IMR-90 (cell line): ENCODE measurements at regions of chr6 and their contacts with region 1.

Region 1: DNA sequence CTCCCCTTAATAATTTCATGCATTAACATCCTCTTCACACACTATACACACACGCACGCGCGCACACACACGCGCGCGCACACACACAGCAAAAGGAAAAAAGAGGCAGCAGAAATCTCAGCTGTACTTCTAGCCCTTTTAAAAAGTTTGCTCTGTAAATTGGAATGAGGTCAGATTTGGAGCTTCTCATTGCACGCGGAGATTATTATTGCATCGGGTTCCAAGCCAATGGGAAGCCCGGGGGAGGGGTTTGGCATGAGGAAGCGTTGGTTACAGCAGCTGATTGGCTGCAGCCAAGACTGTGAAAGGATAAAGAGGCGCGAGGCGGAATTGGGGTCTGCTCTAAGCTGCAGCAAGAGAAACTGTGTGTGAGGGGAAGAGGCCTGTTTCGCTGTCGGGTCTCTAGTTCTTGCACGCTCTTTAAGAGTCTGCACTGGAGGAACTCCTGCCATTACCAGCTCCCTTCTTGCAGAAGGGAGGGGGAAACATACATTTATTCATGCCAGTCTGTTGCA is at the start of gene SOX4:
- DNase-seq: peak; percentile 98
- ATAC-seq: peak; percentile 79
- H3K4me3 ChIP-seq: peak within 1 kb of the TSS; percentile 84
- H3K27ac ChIP-seq: peak within 1 kb of the TSS; percentile 90
- H3K4me1 ChIP-seq: no peaks in the 10 kb centered on the region
- H3K27me3 ChIP-seq: no peaks in the 10 kb centered on the region
- CTCF ChIP-seq: no peak
- POLR2A ChIP-seq: peak; percentile 98
- RAD21 ChIP-seq: no peak; the same call in 1 of the 2 replicates
- total RNA-seq, gene SOX4: 4.7 and 6.4 TPM in 2 replicates

Region 2: GRCh38 chr6:20564269-20564668 is 1029.2 kb before region 1 on chr6:
- CTCF ChIA-PET with region 1: interaction called, 8 read pairs
- POLR2A ChIA-PET with region 1: interaction called, 4 read pairs
- dilution Hi-C with region 1: no loop called
- in situ Hi-C with region 1: loop called (anchors 5 kb)
- intact Hi-C with region 1: loop called (anchors 1 kb)
- DNase-seq: peak; percentile 27
- ATAC-seq: peak; percentile 64
- H3K4me3 ChIP-seq: no peak overlapping the region
- H3K27ac ChIP-seq: no peak overlapping the region
- H3K4me1 ChIP-seq: no peaks in the 10 kb centered on the region; the same call in 1 of the 2 replicates
- H3K27me3 ChIP-seq: no peaks in the 10 kb centered on the region
- CTCF ChIP-seq: peak; percentile 59
- POLR2A ChIP-seq: no peak
- RAD21 ChIP-seq: peak; percentile 61

Region 3: DNA sequence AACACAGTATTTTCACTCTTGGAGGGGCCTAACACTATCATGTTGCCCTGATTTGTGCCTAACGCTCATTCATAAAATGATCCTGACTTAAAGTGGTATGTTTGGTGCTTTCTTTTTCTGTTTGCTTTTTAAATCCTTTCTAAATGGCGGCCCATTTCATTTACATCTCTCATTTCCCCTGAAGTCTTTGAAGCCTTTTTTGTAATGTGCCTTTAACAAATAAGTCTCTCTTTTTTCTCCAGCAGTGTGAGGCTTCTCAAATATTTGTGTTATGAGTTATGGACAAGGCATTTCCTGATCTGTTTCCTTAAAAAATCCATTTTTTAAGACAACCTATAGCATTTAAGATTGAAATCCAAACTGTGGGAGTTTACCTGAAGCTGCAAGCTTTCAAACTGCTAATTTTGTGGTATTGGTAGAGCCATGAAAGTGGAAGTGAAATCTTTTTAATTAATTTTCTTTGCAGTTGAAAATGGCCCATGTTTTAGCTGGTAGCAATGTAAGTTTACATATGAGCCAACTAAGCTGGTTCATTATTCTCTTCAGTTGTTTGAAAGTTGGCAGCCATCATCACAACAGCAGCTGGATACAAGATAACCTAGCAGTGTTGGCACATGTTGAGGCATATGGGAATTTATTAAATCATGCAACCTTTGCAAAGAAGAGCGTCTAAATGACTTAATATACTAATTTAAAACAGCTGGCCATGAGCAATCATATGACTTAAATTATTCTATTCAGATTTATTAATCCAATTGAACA is 589.5 kb before region 1 on chr6:
- CTCF ChIA-PET with region 1: no interaction called
- POLR2A ChIA-PET with region 1: no interaction called
- dilution Hi-C with region 1: no loop called
- in situ Hi-C with region 1: loop called (anchors 10 kb)
- intact Hi-C with region 1: no loop called
- DNase-seq: peak; percentile 89
- ATAC-seq: peak; percentile 77
- H3K4me3 ChIP-seq: no peak overlapping the region
- H3K27ac ChIP-seq: peak overlapping the region; percentile 13; the same call in 1 of the 2 replicates
- H3K4me1 ChIP-seq: peaks cover 5% of the 10 kb centered on the region; the same call in 1 of the 2 replicates
- H3K27me3 ChIP-seq: no peaks in the 10 kb centered on the region
- CTCF ChIP-seq: no peak
- POLR2A ChIP-seq: no peak
- RAD21 ChIP-seq: no peak

Region 4: GRCh38 chr6:21666199-21666691 is 72.8 kb after region 1 on chr6:
- CTCF ChIA-PET with region 1: no interaction called
- POLR2A ChIA-PET with region 1: interaction called, 5 read pairs
- dilution Hi-C with region 1: no loop called
- in situ Hi-C with region 1: no loop called
- intact Hi-C with region 1: loop called (anchors 2 kb)
- DNase-seq: no peak
- ATAC-seq: peak; percentile 69
- H3K4me3 ChIP-seq: peak overlapping the region; percentile 74
- H3K27ac ChIP-seq: peak overlapping the region; percentile 85
- H3K4me1 ChIP-seq: peaks cover 2% of the 10 kb centered on the region; the same call in 1 of the 2 replicates
- H3K27me3 ChIP-seq: peaks cover 21% of the 10 kb centered on the region
- CTCF ChIP-seq: no peak
- POLR2A ChIP-seq: no peak
- RAD21 ChIP-seq: no peak

Region 5: DNA sequence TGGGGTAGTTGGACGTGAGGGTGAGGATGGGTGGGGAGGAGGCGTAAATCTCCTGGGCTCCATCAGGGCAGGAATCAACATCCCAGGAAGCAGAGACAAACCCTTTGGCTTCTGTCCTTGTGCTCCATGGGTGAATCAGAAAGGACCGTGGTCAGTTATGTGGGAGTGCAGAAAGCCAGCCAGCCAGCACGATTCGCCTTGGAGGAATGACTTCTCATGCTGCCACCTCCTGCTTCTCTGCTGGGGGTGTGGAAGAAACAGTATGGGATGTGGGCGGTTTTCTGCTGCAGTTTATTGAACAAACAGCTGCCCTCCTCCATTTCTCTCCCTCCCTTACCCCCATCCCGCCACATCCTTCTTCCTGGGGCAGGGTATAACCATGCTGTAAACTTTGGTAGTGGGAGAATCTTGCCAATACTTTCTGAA is 214.6 kb after region 1 on chr6:
- CTCF ChIA-PET with region 1: no interaction called
- POLR2A ChIA-PET with region 1: no interaction called
- dilution Hi-C with region 1: no loop called
- in situ Hi-C with region 1: no loop called
- intact Hi-C with region 1: loop called (anchors 5 kb)
- DNase-seq: peak; percentile 78
- ATAC-seq: peak; percentile 91
- H3K4me3 ChIP-seq: no peak overlapping the region
- H3K27ac ChIP-seq: peak overlapping the region; percentile 57
- H3K4me1 ChIP-seq: peaks cover 18% of the 10 kb centered on the region
- H3K27me3 ChIP-seq: no peaks in the 10 kb centered on the region
- CTCF ChIP-seq: no peak
- POLR2A ChIP-seq: no peak
- RAD21 ChIP-seq: no peak

Region 6: DNA sequence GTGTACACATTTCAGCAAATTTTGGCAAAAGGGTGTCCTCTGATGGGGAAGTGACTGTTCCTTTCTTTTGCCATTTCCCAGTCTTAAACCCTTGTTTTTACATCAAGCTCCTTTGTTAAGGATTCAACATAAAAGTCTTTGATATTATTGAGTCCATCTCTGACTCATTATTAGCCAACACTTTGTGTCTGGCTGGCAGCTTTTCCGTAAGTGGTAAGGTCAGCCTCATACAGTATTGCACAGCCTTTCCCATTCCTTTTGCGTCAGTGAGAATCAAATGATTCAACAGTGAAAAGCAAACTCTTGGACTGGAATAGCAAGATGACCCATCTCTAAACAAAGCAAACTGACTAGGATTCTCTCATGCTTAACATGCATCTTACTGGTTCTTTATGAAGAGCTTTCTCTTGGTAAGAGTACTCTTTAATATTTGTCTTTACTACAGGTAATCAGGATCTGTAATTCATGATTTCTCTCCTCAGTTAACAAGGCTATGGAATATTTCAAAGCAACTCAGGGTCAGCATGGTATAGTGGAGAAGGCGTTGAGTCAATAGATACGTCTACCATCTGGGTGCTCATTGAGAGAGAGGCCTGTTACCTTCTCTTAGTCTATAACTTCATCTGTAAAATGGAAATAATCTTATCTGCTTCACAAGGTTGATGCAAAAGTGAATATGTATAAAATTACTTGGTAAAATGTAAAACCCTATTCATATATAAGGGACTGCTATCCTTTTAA is 519.7 kb after region 1 on chr6:
- CTCF ChIA-PET with region 1: no interaction called
- POLR2A ChIA-PET with region 1: no interaction called
- dilution Hi-C with region 1: no loop called
- in situ Hi-C with region 1: no loop called
- intact Hi-C with region 1: loop called (anchors 10 kb)
- DNase-seq: peak; percentile 100
- ATAC-seq: peak; percentile 97
- H3K4me3 ChIP-seq: no peak overlapping the region
- H3K27ac ChIP-seq: peak overlapping the region; percentile 78; the same call in 1 of the 2 replicates
- H3K4me1 ChIP-seq: peaks cover 7% of the 10 kb centered on the region
- H3K27me3 ChIP-seq: no peaks in the 10 kb centered on the region
- CTCF ChIP-seq: no peak
- POLR2A ChIP-seq: 0 out of 2 replicates have a peak, but pooled peaks have one; percentile 48
- RAD21 ChIP-seq: peak; percentile 31; the same call in 1 of the 2 replicates

Region 7: GRCh38 chr6:22828179-22829062 is 1235.0 kb after region 1 on chr6:
- CTCF ChIA-PET with region 1: no interaction called
- POLR2A ChIA-PET with region 1: no interaction called
- dilution Hi-C with region 1: no loop called
- in situ Hi-C with region 1: no loop called
- intact Hi-C with region 1: loop called (anchors 5 kb)
- DNase-seq: peak; percentile 97
- ATAC-seq: peak; percentile 84
- H3K4me3 ChIP-seq: no peak overlapping the region
- H3K27ac ChIP-seq: peak overlapping the region; percentile 17; the same call in 1 of the 2 replicates
- H3K4me1 ChIP-seq: peaks cover 4% of the 10 kb centered on the region
- H3K27me3 ChIP-seq: no peaks in the 10 kb centered on the region
- CTCF ChIP-seq: peak; percentile 64
- POLR2A ChIP-seq: no peak
- RAD21 ChIP-seq: peak; percentile 65